ENCODE measurements at regions of chrX and their contacts with region 1.

Region 1: GRCh38 chrX:68807818-68808217 is 21.0 kb upstream of the EFNB1 start:
- DNase-seq: no peak
- ATAC-seq: no peak
- H3K4me3 Mint-ChIP-seq: no peak overlapping the region
- H3K27ac Mint-ChIP-seq: no peak overlapping the region
- H3K4me1 Mint-ChIP-seq: no peaks in the 10 kb centered on the region
- H3K27me3 Mint-ChIP-seq: peaks cover 3% of the 10 kb centered on the region
- CTCF ChIP-seq: no peak

Region 2: DNA sequence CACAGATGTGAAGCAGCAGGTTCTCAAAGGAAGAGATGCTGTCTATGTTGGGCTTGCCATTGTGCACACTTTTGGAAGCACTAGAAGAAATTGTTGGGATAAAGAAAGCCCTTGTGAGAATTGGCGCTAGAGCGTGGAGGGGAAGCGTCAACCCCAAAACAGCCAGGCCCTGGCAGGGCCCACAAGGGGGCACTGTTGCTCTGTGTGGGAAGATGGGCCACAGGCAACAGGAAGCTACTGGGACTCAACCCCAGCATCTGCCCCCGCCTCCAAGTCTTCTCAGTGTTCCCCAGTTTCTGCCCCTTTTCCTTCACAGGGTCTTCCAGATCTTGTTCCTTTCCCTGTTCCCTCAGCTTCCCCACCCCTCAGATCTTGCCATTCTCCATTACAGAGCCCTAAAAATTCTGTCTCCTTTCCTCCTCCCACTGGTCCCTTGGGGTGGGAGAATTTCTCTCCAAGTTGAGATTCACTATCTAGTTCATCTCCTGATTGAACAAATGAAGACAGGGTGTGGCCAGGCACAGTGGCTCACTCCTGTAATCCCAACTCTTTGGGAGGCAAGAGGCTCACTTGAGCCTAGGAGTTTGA is 74.8 kb before region 1 on chrX:
- CTCF ChIA-PET with region 1: interaction called, 7 read pairs
- POLR2A ChIA-PET with region 1: no interaction called
- intact Hi-C with region 1: loop called (anchors 10 kb)
- DNase-seq: peak; percentile 73
- ATAC-seq: peak; percentile 71
- H3K4me3 Mint-ChIP-seq: no peak overlapping the region
- H3K27ac Mint-ChIP-seq: no peak overlapping the region
- H3K4me1 Mint-ChIP-seq: peaks cover 2% of the 10 kb centered on the region
- H3K27me3 Mint-ChIP-seq: peaks cover 4% of the 10 kb centered on the region
- CTCF ChIP-seq: peak; percentile 53

Region 3: GRCh38 chrX:68936608-68937007 is 128.8 kb after region 1 on chrX:
- CTCF ChIA-PET with region 1: no interaction called
- POLR2A ChIA-PET with region 1: no interaction called
- intact Hi-C with region 1: no loop called
- DNase-seq: no peak
- ATAC-seq: no peak
- H3K4me3 Mint-ChIP-seq: no peak overlapping the region
- H3K27ac Mint-ChIP-seq: no peak overlapping the region
- H3K4me1 Mint-ChIP-seq: no peaks in the 10 kb centered on the region
- H3K27me3 Mint-ChIP-seq: no peaks in the 10 kb centered on the region
- CTCF ChIP-seq: no peak